Activated CD8-positive, alpha-beta T cell treated with anti-CD3 and anti-CD28 coated beads, Interleukin-2, amount 10 ng/mL, durations not matched to agents 7 days and 5 days (primary cell): ENCODE measurements at regions of chr2 and their contacts with region 1.

Region 1: DNA sequence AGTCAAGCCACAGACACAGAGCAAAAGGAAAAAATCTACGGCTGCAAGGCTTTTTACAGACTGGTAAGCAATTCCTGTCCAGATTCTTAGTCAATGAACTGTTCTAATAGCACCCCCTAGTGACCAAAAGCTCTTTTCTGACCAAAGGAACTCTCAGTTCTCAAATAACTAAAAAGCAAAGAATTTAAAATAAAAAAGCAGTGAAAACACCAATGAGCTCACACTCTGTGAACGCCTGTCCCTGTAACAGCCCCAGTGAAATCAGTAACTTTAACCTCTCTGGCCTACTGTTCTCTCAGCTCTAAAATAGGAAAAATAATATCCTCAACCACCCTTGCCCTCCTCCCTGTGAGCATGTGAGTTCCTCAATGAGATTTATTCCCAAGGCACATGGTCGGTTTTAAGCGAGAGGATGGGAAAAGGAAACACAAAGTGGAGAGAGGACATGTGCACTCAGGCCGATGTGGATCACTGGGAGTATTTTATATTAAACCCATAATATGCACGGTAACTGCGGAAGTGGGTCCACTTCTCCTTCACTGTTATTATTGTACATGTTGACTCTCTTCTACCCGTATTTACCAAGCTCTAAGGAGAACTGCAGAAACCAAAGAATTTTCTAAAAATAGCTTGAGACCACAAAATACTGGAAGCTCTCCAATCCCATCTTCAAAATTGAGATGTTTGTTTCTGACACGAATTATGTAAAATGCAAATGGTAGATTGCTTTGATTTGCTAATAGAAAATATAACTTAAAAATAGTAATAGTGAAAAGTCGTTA is 128.5 kb downstream of the STK39 start:
- DNase-seq: peak; percentile 36
- ATAC-seq: peak; percentile 36
- H3K4me3 Mint-ChIP-seq: no peak overlapping the region
- H3K27ac Mint-ChIP-seq: no peak overlapping the region
- H3K4me1 Mint-ChIP-seq: no peaks in the 10 kb centered on the region
- H3K27me3 Mint-ChIP-seq: no peaks in the 10 kb centered on the region

Region 2: GRCh38 chr2:167814881-167815718 is 303.8 kb before region 1 on chr2:
- CTCF ChIA-PET with region 1: no interaction called
- POLR2A ChIA-PET with region 1: no interaction called
- DNase-seq: no peak
- ATAC-seq: no peak
- H3K4me3 Mint-ChIP-seq: no peak overlapping the region
- H3K27ac Mint-ChIP-seq: no peak overlapping the region
- H3K4me1 Mint-ChIP-seq: no peaks in the 10 kb centered on the region
- H3K27me3 Mint-ChIP-seq: no peaks in the 10 kb centered on the region

Region 3: GRCh38 chr2:167964650-167965413 is 154.1 kb before region 1 on chr2:
- CTCF ChIA-PET with region 1: interaction called, 27 read pairs
- POLR2A ChIA-PET with region 1: no interaction called
- DNase-seq: no peak
- ATAC-seq: no peak
- H3K4me3 Mint-ChIP-seq: no peak overlapping the region
- H3K27ac Mint-ChIP-seq: no peak overlapping the region
- H3K4me1 Mint-ChIP-seq: no peaks in the 10 kb centered on the region
- H3K27me3 Mint-ChIP-seq: no peaks in the 10 kb centered on the region

Region 4: DNA sequence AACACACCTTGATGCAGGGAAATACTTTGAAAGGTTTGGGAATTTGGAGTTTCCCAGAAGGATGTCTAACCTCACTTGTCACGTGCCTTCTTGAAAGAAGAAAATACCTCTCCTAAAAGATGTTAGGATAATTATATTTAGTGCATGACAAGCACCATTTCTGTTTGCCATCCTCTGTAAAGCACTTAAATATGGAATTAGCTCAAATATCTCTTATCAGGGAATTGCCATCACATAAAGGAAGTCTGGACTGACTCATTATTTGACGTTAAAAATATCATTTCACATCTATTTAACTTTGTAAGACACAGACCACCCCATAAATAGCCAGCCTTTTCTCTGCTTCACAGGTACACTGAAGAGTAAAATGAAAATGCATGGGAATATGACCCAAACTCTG is 11.6 kb before region 1 on chr2:
- CTCF ChIA-PET with region 1: interaction called, 25 read pairs
- POLR2A ChIA-PET with region 1: interaction called, 3 read pairs
- DNase-seq: no peak
- ATAC-seq: no peak
- H3K4me3 Mint-ChIP-seq: no peak overlapping the region
- H3K27ac Mint-ChIP-seq: no peak overlapping the region
- H3K4me1 Mint-ChIP-seq: no peaks in the 10 kb centered on the region
- H3K27me3 Mint-ChIP-seq: no peaks in the 10 kb centered on the region

Region 5: GRCh38 chr2:168311261-168311910 is 192.5 kb after region 1 on chr2:
- CTCF ChIA-PET with region 1: no interaction called
- POLR2A ChIA-PET with region 1: no interaction called
- DNase-seq: no peak
- ATAC-seq: no peak
- H3K4me3 Mint-ChIP-seq: no peak overlapping the region
- H3K27ac Mint-ChIP-seq: no peak overlapping the region
- H3K4me1 Mint-ChIP-seq: no peaks in the 10 kb centered on the region
- H3K27me3 Mint-ChIP-seq: no peaks in the 10 kb centered on the region

Region 6: GRCh38 chr2:168416555-168416954 is 297.6 kb after region 1 on chr2:
- CTCF ChIA-PET with region 1: no interaction called
- POLR2A ChIA-PET with region 1: no interaction called
- DNase-seq: no peak
- ATAC-seq: no peak
- H3K4me3 Mint-ChIP-seq: no peak overlapping the region
- H3K27ac Mint-ChIP-seq: no peak overlapping the region
- H3K4me1 Mint-ChIP-seq: peaks cover 3% of the 10 kb centered on the region
- H3K27me3 Mint-ChIP-seq: no peaks in the 10 kb centered on the region